ENCODE measurements at regions of chr13 and their contacts with region 1.

Region 1: DNA sequence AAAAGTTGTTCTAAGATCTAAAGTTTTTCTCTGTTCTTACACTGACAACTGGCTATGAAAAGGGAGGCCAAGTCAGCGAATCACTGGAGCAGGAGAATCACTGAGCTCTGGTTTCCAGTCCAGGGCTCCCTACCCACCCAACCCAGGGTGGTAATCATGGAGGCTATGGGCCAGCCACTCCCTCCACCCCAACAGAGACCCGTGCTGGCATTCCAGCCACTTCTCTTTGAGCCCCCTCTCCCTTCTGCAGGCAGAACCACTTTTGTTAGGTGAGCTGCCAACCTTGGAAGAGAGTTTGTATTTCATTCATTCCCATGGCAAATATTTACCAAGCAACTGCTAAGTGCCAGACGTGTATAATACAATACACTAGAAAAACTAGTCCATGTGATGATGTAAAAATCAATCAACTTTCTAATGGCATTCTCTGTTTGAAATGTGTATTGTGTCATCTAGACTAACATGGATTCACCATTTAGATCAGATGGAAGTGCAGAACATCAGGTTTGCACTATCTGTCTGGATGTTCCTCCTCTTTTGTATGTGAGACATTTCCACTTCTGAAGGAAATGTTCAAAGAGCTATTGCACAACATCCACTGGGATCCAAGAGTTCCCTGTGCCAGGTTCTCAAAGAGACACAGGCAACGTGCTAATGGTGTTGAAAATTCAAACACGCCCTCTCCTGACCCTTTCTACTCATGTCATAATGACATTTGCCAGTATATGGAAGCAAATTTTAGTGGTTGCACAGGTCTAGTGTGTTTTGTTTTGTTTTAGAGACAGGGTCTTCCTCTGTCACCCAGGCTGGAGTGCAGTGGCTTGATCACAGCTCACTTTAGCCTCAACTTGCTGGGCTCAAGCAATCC is 5.3 kb downstream of the MLNR start:
- DNase-seq: no peak
- ATAC-seq: no peak
- H3K4me3 ChIP-seq: no peak overlapping the region
- H3K27ac ChIP-seq: no peak overlapping the region
- H3K4me1 ChIP-seq: no peaks in the 10 kb centered on the region
- H3K27me3 ChIP-seq: no peaks in the 10 kb centered on the region
- CTCF ChIP-seq: no peak

Region 2: DNA sequence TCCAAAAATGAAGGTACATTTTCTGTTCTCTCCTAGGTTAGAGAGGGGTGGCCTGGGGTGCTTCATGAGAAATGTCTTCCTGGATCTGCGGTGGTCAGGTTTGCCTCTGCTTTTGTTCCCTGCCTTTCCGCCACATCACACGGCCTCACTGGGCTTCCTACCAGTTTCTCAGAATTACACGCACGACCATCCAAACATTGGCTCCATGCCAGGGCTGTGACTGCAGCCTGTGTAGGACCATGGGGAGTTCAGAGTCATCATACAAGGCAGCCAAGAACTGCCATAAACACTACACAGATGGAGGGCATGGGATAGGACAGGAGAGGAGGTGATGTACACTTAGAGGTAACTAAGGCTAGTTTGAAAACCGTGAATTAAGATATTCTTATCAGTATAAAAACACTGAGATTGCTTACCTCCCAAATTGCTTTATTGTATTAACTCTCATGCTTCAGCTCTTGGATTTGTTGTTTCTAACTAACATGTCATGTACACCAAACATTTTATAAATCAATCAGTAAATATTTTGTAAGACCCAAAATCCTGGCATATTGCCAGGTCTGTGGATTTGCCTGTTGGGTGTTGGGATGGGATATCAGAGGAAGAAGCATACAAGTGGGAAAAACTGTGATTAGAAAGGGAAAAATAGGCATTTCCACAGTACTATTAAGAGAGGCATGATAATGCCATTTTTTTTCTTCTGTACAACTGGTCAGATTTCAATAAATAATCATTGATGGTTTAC is 67.5 kb after region 1 on chr13:
- CTCF ChIA-PET with region 1: no interaction called
- POLR2A ChIA-PET with region 1: interaction called, 19 read pairs
- in situ Hi-C with region 1: no loop called
- intact Hi-C with region 1: no loop called
- DNase-seq: no peak
- ATAC-seq: no peak
- H3K4me3 ChIP-seq: no peak overlapping the region
- H3K27ac ChIP-seq: no peak overlapping the region
- H3K4me1 ChIP-seq: no peaks in the 10 kb centered on the region
- H3K27me3 ChIP-seq: no peaks in the 10 kb centered on the region
- CTCF ChIP-seq: no peak

Region 3: DNA sequence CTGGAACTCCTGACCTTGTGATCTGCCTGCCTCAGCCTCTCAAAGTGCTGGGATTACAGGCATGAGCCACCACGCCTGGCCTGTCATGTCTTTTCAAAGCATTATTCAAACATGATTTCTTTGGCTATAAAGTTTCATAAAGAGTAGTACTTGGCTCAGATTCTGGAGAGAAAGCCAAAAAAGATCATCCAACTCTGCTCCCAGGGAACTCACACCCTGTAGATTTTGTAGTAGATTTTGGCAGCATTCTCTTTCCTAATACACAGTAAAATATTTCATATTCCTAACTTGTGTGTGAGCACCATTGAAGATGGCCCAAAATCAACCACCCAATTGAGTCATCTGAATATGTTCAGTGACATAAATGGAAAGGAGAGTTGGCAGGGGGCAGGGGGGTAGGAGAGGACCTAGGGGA is 170.0 kb after region 1 on chr13:
- CTCF ChIA-PET with region 1: no interaction called
- POLR2A ChIA-PET with region 1: no interaction called
- in situ Hi-C with region 1: no loop called
- intact Hi-C with region 1: no loop called
- DNase-seq: no peak
- ATAC-seq: no peak
- H3K4me3 ChIP-seq: no peak overlapping the region
- H3K27ac ChIP-seq: no peak overlapping the region
- H3K4me1 ChIP-seq: no peaks in the 10 kb centered on the region
- H3K27me3 ChIP-seq: no peaks in the 10 kb centered on the region
- CTCF ChIP-seq: no peak

Measured in Panc1 (cell line).